ENCODE measurements at regions of chrX and their contacts with region 1.

Region 1: GRCh38 chrX:30889147-30890140 is at the start of gene TAB3:
- DNase-seq: peak; percentile 94 to 96
- H3K4me3 ChIP-seq: peak within 1 kb of the TSS; percentile 82
- H3K4me3 Mint-ChIP-seq: peak within 1 kb of the TSS; percentile 95
- H3K27ac Mint-ChIP-seq: peak within 1 kb of the TSS; percentile 80
- H3K4me1 ChIP-seq: peaks cover 15% of the 10 kb centered on the region
- H3K4me1 Mint-ChIP-seq: peaks cover 16% of the 10 kb centered on the region
- H3K27me3 ChIP-seq: no peaks in the 10 kb centered on the region
- H3K27me3 Mint-ChIP-seq: no peaks in the 10 kb centered on the region
- CTCF ChIP-seq: no peak
- total RNA-seq, gene TAB3: 14.8 TPM in 2 replicates

Region 2: DNA sequence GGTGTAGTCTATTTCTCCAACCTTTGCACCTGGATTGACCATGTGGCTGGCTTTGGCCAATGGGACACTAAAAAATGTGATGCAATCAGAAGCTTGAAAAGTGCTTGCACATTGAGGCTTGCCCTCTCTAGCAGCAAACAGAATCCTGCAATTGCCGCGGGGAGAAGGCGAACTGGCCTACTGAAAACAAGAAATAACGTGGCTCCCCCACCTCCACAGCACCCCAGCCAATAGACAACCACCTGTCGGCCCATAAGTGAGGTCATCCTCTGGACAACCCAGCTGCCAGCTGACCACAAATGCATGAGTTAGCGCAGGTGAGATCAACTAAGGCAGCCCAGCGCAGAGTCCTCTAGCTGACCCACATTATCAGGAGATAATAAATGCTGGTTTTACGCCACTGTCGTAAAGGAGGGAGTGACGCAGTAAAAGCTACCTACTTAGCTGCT is 141.0 kb before region 1 on chrX:
- CTCF ChIA-PET with region 1: no interaction called
- POLR2A ChIA-PET with region 1: interaction called, 5 read pairs
- intact Hi-C with region 1: loop called (anchors 2 kb)
- DNase-seq: peak; percentile 87 to 93
- H3K4me3 ChIP-seq: peak overlapping the region; percentile 46
- H3K4me3 Mint-ChIP-seq: peak overlapping the region; percentile 75
- H3K27ac Mint-ChIP-seq: peak overlapping the region; percentile 89
- H3K4me1 ChIP-seq: no peaks in the 10 kb centered on the region
- H3K4me1 Mint-ChIP-seq: no peaks in the 10 kb centered on the region
- H3K27me3 ChIP-seq: no peaks in the 10 kb centered on the region
- H3K27me3 Mint-ChIP-seq: no peaks in the 10 kb centered on the region
- CTCF ChIP-seq: no peak

Region 3: GRCh38 chrX:31147175-31147574 is 257.7 kb after region 1 on chrX:
- CTCF ChIA-PET with region 1: no interaction called
- POLR2A ChIA-PET with region 1: no interaction called
- intact Hi-C with region 1: no loop called
- DNase-seq: no peak
- H3K4me3 ChIP-seq: no peak overlapping the region
- H3K4me3 Mint-ChIP-seq: no peak overlapping the region
- H3K27ac Mint-ChIP-seq: no peak overlapping the region
- H3K4me1 ChIP-seq: no peaks in the 10 kb centered on the region
- H3K4me1 Mint-ChIP-seq: no peaks in the 10 kb centered on the region
- H3K27me3 ChIP-seq: no peaks in the 10 kb centered on the region
- H3K27me3 Mint-ChIP-seq: no peaks in the 10 kb centered on the region
- CTCF ChIP-seq: no peak

Region 4: DNA sequence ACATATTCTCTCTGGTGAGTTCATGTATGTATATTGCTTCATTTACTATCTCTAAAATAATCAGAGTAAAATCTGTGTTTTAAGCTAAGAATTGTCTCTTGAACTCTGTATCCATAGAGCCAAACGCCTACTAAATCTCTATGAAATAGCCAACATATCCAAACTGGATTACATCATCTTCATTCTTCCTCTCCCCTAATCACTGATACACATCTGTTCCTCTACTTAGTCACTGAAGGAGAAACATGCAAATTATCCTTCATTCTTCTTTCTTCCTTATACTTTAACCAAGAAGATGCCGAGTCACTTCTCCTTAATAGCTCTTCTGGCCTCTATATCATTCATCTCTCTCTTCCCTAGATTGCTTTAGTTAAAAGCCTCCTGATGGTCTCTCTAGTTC is 812.8 kb after region 1 on chrX:
- CTCF ChIA-PET with region 1: no interaction called
- POLR2A ChIA-PET with region 1: no interaction called
- intact Hi-C with region 1: no loop called
- DNase-seq: no peak
- H3K4me3 ChIP-seq: no peak overlapping the region
- H3K4me3 Mint-ChIP-seq: no peak overlapping the region
- H3K27ac Mint-ChIP-seq: no peak overlapping the region
- H3K4me1 ChIP-seq: no peaks in the 10 kb centered on the region
- H3K4me1 Mint-ChIP-seq: peaks cover 13% of the 10 kb centered on the region
- H3K27me3 ChIP-seq: no peaks in the 10 kb centered on the region
- H3K27me3 Mint-ChIP-seq: no peaks in the 10 kb centered on the region
- CTCF ChIP-seq: no peak

Measured in Caco-2 (cell line).